ENCODE measurements at regions of chr5 and their contacts with region 1.

Region 1: GRCh38 chr5:180860887-180861822 is at the start of gene ZFP62:
- H3K4me3 ChIP-seq: peak within 1 kb of the TSS; percentile 71
- H3K27ac ChIP-seq: peak within 1 kb of the TSS; percentile 94
- H3K4me1 ChIP-seq: peaks cover 2% of the 10 kb centered on the region; the same call in 1 of the 2 replicates
- CTCF ChIP-seq: peak; percentile 48; the same call in 1 of the 2 replicates

Region 2: DNA sequence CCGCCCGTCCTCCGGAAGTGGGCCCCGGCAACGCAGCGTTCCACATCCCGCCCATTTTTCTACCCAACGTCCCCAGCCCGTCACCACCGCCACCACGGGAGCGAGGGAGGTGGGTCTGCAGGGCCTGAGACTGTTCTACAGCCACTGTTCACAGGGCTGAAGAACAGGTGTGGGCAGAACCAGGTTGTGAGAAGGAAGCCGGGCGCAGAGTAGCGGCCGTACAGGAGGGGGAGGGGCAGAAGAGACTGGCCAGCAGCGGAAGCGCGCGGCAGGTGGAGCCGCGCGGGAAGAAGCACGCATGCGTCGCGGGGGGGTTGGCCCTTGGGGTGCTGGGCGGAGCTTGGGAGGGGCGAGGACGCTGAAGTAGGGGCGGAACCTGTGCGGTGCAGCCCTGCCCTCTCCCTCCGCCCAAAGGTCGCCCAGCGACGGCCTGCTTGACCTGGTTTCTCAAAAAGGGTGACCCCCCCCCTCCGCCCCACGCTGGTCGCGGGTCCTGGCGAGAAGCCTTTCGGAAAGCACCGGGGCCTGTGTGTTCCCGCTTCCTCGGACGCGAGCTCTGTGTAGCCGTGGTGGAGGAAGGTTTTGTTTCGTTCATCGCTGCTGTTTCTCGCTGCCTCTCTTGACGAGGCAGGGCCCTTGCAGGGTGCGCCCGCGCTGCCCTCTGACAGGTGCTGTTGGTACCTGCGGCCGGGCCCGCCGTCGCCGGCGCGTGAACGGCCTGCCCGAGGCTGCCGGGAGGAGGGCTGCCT is 50.8 kb before region 1 on chr5:
- CTCF ChIA-PET with region 1: no interaction called
- POLR2A ChIA-PET with region 1: interaction called, 14 read pairs
- H3K4me3 ChIP-seq: peak overlapping the region; percentile 88
- H3K27ac ChIP-seq: peak overlapping the region; percentile 96
- H3K4me1 ChIP-seq: peaks cover 14% of the 10 kb centered on the region
- CTCF ChIP-seq: no peak

Measured in HEK293 (cell line).